PC-3 (cell line): ENCODE measurements at regions of chr18 and their contacts with region 1.

Region 1: DNA sequence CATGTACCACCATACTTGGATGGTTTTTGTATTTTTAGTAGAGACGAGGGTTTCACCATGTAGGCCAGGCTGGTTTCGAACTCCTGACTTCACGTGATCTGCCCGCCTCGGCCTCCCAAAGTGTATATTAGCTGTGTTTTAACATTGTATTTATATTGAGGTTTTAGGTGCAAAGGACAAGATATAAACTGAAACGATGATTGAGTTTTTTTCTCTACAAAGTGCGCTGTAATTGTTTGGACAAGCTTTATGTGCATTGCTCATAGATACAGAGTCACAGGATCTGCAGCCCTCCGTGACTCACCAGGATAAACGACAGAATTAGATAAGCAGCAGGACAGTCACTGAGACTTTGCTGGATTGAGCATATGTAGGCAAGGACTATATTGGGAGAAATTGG is 17.6 kb downstream of the CDH7 start:
- DNase-seq: peak; percentile 90
- ATAC-seq: peak; percentile 97
- H3K4me3 ChIP-seq: 0 out of 2 replicates have a peak overlapping the region, but pooled peaks have one; percentile 17
- H3K27ac ChIP-seq: peak overlapping the region; percentile 78
- H3K4me1 ChIP-seq: peaks cover 32% of the 10 kb centered on the region
- H3K27me3 ChIP-seq: no peaks in the 10 kb centered on the region
- CTCF ChIP-seq: no peak

Region 2: DNA sequence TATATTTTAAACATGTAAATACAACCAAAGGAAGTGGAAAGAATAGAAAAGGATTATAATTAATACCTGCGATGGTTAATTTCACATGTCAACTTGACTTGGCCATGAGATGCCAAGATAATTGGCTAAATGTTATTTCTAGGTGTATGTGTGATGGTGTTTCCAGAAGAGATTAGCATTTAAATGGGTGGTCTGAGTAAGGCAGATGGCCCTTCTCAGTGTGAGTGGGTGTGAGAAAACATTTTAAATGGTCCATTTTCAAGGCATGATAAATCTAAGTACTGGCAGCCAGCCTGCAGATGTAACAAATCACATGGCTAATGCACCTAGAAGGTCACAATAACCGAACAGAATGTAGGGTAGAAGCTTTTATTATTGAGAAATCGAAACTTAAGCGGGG is 117.2 kb before region 1 on chr18:
- CTCF ChIA-PET with region 1: no interaction called
- POLR2A ChIA-PET with region 1: no interaction called
- intact Hi-C with region 1: no loop called
- DNase-seq: no peak
- ATAC-seq: no peak
- H3K4me3 ChIP-seq: no peak overlapping the region
- H3K27ac ChIP-seq: no peak overlapping the region
- H3K4me1 ChIP-seq: peaks cover 5% of the 10 kb centered on the region; the same call in 1 of the 2 replicates
- H3K27me3 ChIP-seq: no peaks in the 10 kb centered on the region
- CTCF ChIP-seq: no peak

Region 3: GRCh38 chr18:65808759-65809158 is 40.4 kb after region 1 on chr18:
- CTCF ChIA-PET with region 1: interaction called, 13 read pairs
- POLR2A ChIA-PET with region 1: no interaction called
- intact Hi-C with region 1: no loop called
- DNase-seq: no peak
- ATAC-seq: no peak
- H3K4me3 ChIP-seq: no peak overlapping the region
- H3K27ac ChIP-seq: no peak overlapping the region
- H3K4me1 ChIP-seq: no peaks in the 10 kb centered on the region
- H3K27me3 ChIP-seq: no peaks in the 10 kb centered on the region
- CTCF ChIP-seq: no peak

Region 4: GRCh38 chr18:65906621-65907034 is 138.2 kb after region 1 on chr18:
- CTCF ChIA-PET with region 1: no interaction called
- POLR2A ChIA-PET with region 1: no interaction called
- intact Hi-C with region 1: loop called (anchors 1 kb)
- DNase-seq: peak; percentile 83
- ATAC-seq: peak; percentile 90
- H3K4me3 ChIP-seq: no peak overlapping the region
- H3K27ac ChIP-seq: peak overlapping the region; percentile 82
- H3K4me1 ChIP-seq: peaks cover 22% of the 10 kb centered on the region
- H3K27me3 ChIP-seq: no peaks in the 10 kb centered on the region
- CTCF ChIP-seq: no peak